Activated CD8-positive, alpha-beta T cell treated with anti-CD3 and anti-CD28 coated beads, Interleukin-2, amount 10 ng/mL, durations not matched to agents 7 days and 5 days (primary cell): ENCODE measurements at regions of chr11 and their contacts with region 1.

Region 1: GRCh38 chr11:66069715-66070603 is at the start of gene PACS1:
- DNase-seq: peak; percentile 85
- ATAC-seq: peak; percentile 69
- H3K4me3 Mint-ChIP-seq: peak within 1 kb of the TSS; percentile 89
- H3K27ac Mint-ChIP-seq: peak within 1 kb of the TSS; percentile 88
- H3K4me1 Mint-ChIP-seq: peaks cover 68% of the 10 kb centered on the region
- H3K27me3 Mint-ChIP-seq: no peaks in the 10 kb centered on the region
- total RNA-seq, gene PACS1: 84.6 to 91.6 TPM

Region 2: DNA sequence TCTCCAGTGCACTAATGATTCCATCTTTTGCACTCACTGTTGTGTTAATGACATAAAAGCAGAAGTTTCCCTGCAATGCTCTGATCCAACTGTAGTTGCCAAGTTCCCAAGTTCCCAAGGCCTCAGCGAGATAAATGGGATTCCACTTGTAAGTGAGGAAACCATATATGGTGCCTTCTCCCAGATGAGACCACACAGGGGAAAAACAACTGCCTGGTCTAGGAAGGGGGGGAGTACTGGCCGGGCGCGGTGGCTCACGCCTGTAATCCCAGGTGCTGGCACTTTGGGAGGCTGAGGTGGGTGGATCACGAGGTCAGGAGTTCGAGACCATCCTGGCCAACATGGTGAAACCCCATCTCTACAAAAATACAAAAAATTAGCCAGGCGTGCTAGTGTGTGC is 384.0 kb before region 1 on chr11:
- CTCF ChIA-PET with region 1: no interaction called
- POLR2A ChIA-PET with region 1: no interaction called
- DNase-seq: no peak
- ATAC-seq: no peak
- H3K4me3 Mint-ChIP-seq: no peak overlapping the region
- H3K27ac Mint-ChIP-seq: no peak overlapping the region
- H3K4me1 Mint-ChIP-seq: no peaks in the 10 kb centered on the region
- H3K27me3 Mint-ChIP-seq: peaks cover 11% of the 10 kb centered on the region

Region 3: DNA sequence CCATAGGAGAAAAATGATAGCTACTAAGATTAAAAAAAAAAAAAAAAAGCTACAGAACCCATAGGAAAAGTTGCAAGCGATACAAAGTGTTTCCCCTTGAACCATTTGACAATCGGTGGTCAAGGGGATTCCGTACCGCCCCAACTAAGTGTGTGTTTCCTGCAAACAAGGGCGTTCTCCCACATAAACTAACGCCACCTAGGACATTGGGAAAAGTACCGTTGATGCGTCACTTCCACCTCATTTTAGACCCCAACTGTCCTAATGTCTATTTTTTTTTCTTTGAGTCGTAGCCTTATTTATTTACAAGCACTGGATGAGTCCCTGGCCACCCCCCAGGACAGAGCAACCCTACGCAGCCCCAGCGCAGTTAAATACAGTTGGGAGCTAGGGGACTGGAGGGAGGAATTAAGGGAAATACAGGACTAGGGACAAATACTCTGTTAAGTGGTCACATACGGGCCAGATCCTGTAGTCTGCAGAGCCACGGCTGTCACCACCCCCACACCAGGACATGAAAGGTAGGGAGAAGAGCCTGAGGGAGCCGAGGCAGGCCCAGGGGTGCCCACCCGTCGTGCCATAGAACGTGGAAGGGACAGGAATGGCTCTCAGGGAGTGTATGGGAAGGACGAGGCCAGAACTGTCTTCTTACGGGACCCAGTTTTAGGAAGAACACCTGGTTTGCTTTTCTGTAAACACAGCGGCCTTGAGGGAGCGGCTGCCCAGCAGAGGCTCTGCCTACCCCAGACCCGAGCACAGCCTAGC is 87.0 kb before region 1 on chr11:
- CTCF ChIA-PET with region 1: no interaction called
- POLR2A ChIA-PET with region 1: no interaction called
- DNase-seq: no peak
- ATAC-seq: no peak
- H3K4me3 Mint-ChIP-seq: no peak overlapping the region
- H3K27ac Mint-ChIP-seq: no peak overlapping the region
- H3K4me1 Mint-ChIP-seq: no peaks in the 10 kb centered on the region
- H3K27me3 Mint-ChIP-seq: no peaks in the 10 kb centered on the region

Region 4: DNA sequence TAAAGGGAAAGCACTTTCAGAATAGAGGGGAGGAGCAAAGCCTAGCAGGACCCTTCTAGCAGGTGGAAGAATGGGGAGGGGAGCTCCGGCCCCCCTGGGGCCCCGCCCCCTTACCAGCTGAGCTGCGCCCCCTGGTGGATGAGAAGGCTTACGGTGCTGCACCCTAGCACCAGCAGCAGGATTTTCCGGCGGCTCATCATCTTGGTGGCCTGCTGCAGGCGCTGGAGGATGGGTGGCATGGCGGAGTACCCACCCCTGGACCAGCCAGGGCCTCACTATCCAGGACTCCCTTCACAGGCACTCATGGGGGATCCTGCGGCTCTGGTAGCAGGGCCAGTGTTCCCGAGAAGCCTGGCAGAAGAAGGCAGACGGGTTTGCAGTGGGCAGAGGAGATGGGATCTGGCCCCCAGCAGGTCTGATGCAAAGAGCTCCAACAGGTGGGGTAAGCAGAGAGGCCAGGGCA is 24.8 kb before region 1 on chr11:
- CTCF ChIA-PET with region 1: interaction called, 61 read pairs
- POLR2A ChIA-PET with region 1: no interaction called
- DNase-seq: peak; percentile 86
- ATAC-seq: peak; percentile 95
- H3K4me3 Mint-ChIP-seq: no peak overlapping the region
- H3K27ac Mint-ChIP-seq: no peak overlapping the region
- H3K4me1 Mint-ChIP-seq: peaks cover 14% of the 10 kb centered on the region
- H3K27me3 Mint-ChIP-seq: peaks cover 11% of the 10 kb centered on the region

Region 5: DNA sequence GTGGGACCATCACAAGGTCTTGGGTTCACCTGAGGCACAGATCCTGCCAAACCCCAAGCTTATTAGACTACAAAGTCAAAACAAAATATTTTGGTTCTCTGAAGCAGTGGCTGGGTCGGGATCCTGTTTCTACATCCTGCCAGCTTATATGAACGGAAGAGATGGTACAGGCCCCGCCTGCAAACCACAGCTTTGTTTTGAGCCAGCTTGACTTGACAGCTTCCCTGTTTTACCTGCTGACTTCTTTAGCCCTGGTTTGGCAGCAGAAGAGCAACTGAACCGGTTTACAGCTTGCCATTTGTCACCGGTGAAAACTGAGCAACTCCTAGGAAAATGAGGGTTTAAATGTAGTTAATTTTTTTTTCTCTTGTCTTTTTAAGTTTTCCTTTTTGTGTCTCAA is 11.5 kb after region 1 on chr11:
- CTCF ChIA-PET with region 1: interaction called, 88 read pairs
- POLR2A ChIA-PET with region 1: interaction called, 11 read pairs
- DNase-seq: peak; percentile 89
- ATAC-seq: peak; percentile 94
- H3K4me3 Mint-ChIP-seq: peak overlapping the region; percentile 84
- H3K27ac Mint-ChIP-seq: peak overlapping the region; percentile 98
- H3K4me1 Mint-ChIP-seq: peaks cover 67% of the 10 kb centered on the region
- H3K27me3 Mint-ChIP-seq: no peaks in the 10 kb centered on the region

Region 6: DNA sequence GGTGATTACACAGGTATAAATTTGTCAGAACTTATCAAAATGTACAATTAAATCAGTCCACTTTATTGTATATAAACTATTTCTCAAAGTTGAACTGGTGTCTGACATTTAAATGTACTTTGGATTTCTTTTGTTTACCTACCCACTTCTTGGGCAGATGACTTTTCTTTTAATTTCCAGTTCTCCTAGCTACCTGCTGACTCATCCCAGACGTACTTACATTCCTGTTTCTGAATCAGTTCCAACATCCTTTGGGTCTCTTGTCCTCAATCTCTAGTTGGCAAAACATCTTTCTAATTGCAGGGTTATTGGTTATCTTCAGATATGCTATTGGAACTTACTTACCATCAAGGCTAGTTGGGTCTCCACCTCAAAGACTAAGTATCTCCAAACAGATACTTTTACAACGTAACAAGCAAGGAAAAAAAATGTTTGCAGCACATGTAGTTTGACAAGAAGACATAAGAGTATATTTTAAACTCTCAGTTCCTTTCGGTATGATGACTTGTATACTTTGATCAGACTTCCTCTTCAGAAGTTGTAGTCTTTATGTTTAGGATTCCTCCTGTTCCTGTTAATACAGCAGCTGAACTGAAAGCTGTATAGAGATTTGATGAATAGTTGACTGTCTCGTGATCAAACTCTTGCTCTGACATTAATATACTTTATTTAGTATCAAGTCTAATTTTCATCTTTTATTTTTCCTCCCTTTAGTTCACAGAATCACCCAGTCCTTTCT is 43.3 kb after region 1 on chr11:
- CTCF ChIA-PET with region 1: interaction called, 116 read pairs
- POLR2A ChIA-PET with region 1: interaction called, 8 read pairs
- DNase-seq: no peak
- ATAC-seq: no peak
- H3K4me3 Mint-ChIP-seq: peak overlapping the region; percentile 50
- H3K27ac Mint-ChIP-seq: peak overlapping the region; percentile 80
- H3K4me1 Mint-ChIP-seq: peaks cover 89% of the 10 kb centered on the region
- H3K27me3 Mint-ChIP-seq: no peaks in the 10 kb centered on the region

Region 7: DNA sequence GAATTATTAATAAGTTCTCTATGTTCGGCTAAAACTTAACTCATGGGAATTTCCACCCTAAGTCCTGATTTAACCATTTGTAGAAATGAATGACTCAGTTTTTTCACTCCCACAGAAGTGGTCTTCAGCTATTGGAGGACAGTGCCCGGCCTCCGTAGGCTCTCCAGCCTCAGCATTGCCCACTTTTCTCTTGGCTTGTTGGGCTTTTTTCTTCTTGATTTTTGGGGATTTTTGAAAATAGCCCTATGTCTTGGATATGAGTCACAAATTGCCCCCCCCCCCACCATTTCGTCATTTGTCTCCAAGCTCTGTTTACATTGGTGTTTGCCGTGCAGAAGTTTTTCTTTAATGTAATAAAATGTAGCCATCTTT is 66.8 kb after region 1 on chr11:
- CTCF ChIA-PET with region 1: interaction called, 112 read pairs
- POLR2A ChIA-PET with region 1: interaction called, 4 read pairs
- DNase-seq: no peak
- ATAC-seq: no peak
- H3K4me3 Mint-ChIP-seq: no peak overlapping the region
- H3K27ac Mint-ChIP-seq: no peak overlapping the region
- H3K4me1 Mint-ChIP-seq: peaks cover 34% of the 10 kb centered on the region
- H3K27me3 Mint-ChIP-seq: no peaks in the 10 kb centered on the region